ENCODE measurements at regions of chr12 and their contacts with region 1.

Region 1: GRCh38 chr12:56007564-56008559 is 10.8 kb downstream of the SUOX start:
- DNase-seq: peak; percentile 38 to 72 (median 63)
- ATAC-seq: peak; percentile 91
- H3K4me3 ChIP-seq: peak overlapping the region; percentile 57
- H3K4me3 Mint-ChIP-seq: peak overlapping the region; percentile 80 to 94 (median 88)
- H3K27ac ChIP-seq: peak overlapping the region; percentile 69
- H3K27ac Mint-ChIP-seq: peak overlapping the region; percentile 20 to 92 (median 84)
- H3K4me1 ChIP-seq: peaks cover 10% of the 10 kb centered on the region in 2 donors
- H3K4me1 Mint-ChIP-seq: peaks cover 16 to 35% (median 29%) of the 10 kb centered on the region in 7 donors
- H3K27me3 ChIP-seq: no peaks in the 10 kb centered on the region
- H3K27me3 Mint-ChIP-seq: no peaks in the 10 kb centered on the region

Region 2: DNA sequence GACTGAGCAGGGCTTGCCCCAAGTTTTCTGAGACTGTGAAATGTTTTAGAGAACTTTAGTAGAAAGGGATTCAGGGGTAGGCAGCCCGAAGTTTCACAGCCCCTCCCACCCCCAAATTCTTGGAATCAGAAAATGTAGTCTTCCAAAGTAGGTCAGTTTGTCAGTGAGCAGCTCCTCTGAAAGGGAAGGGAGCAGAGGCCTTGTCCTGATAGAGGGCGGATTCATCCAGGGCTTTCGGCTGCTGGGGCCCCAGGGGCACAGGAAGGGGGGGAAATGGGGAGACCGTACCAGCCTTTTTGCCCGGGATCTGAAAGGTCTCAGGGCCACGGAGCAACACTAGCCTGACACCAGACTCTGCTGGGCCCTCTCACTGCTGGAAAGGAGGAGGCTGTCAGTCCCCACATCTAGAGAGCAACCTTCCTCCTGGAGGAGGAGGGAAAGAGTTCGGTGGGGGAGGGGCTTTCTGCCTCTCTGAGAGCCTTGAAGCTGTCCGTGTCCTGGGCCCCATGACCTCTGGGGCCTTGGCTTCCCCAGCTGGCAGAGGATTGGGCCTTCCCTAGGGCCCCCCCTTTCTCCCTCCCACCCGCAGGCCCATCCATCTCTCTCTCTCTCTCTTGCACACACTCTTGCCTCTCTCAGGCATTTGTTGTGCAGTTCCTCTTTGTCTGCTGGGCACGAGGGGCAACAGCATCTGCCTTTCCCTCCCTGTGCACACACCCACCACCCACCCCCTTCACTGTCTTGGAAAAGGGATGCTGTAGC is 12.7 kb after region 1 on chr12 and contains the start of gene IKZF4:
- CTCF ChIA-PET with region 1: interaction called, 4 read pairs
- POLR2A ChIA-PET with region 1: interaction called, 9 read pairs
- intact Hi-C with region 1: loop called (anchors 1 to 2 kb)
- DNase-seq: peak in 1 of 9 donors; percentile 36
- ATAC-seq: peak; percentile 55
- H3K4me3 ChIP-seq: peak within 1 kb of the TSS; percentile 41
- H3K4me3 Mint-ChIP-seq: peak within 1 kb of the TSS; percentile 80 to 97 (median 88)
- H3K27ac ChIP-seq: peak within 1 kb of the TSS; percentile 62
- H3K27ac Mint-ChIP-seq: peak within 1 kb of the TSS; percentile 73 to 97 (median 93)
- H3K4me1 ChIP-seq: peaks cover 0 to 16% of the 10 kb centered on the region in 2 donors
- H3K4me1 Mint-ChIP-seq: peaks cover 7 to 58% (median 24%) of the 10 kb centered on the region in 7 donors
- H3K27me3 ChIP-seq: no peaks in the 10 kb centered on the region
- H3K27me3 Mint-ChIP-seq: no peaks in the 10 kb centered on the region
- total RNA-seq, gene IKZF4: 3.6 to 37.8 (median 5.3) TPM

Region 3: DNA sequence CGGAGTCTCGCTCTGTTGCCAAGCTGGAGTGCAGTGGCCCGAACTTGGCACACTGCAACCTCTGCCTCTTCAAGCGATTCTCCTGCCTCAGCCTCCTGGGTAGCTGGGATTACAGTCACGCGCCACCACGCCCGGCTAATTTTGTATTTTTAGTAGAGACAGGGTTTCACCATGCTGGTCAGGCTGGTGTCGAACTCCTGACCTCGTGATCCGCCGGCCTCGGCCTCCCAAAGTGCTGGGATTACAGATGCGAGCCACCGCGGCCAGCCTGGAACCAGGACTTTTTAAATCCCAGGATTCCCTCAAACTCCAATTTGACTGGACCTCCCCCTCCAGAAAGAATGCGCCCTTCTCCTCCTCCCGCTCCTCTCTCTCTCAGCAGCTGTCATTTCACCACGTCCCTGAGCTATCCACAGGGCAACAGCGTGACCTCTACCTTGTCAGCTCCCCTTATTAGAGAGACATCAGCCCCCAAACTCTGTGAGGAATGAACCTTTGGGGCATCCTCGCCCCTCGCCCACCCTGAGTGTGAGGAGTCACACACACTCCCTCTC is 122.2 kb after region 1 on chr12:
- CTCF ChIA-PET with region 1: no interaction called
- POLR2A ChIA-PET with region 1: no interaction called
- intact Hi-C with region 1: no loop called
- DNase-seq: no peak
- ATAC-seq: no peak
- H3K4me3 ChIP-seq: peak overlapping the region; percentile 77
- H3K4me3 Mint-ChIP-seq: peak overlapping the region; percentile 95 to 100 (median 98)
- H3K27ac ChIP-seq: peak overlapping the region; percentile 84
- H3K27ac Mint-ChIP-seq: peak overlapping the region; percentile 86 to 97 (median 91)
- H3K4me1 ChIP-seq: peaks cover 39 to 55% of the 10 kb centered on the region in 2 donors
- H3K4me1 Mint-ChIP-seq: peaks cover 40 to 71% (median 63%) of the 10 kb centered on the region in 7 donors
- H3K27me3 ChIP-seq: no peaks in the 10 kb centered on the region
- H3K27me3 Mint-ChIP-seq: no peaks in the 10 kb centered on the region

Region 4: GRCh38 chr12:56387152-56387736 is 379.4 kb after region 1 on chr12:
- CTCF ChIA-PET with region 1: no interaction called
- POLR2A ChIA-PET with region 1: no interaction called
- intact Hi-C with region 1: no loop called
- DNase-seq: no peak
- ATAC-seq: no peak
- H3K4me3 ChIP-seq: no peak overlapping the region
- H3K4me3 Mint-ChIP-seq: no peak overlapping the region
- H3K27ac ChIP-seq: no peak overlapping the region
- H3K27ac Mint-ChIP-seq: no peak overlapping the region
- H3K4me1 ChIP-seq: no peaks in the 10 kb centered on the region
- H3K4me1 Mint-ChIP-seq: peaks cover 0 to 3% (median 0%) of the 10 kb centered on the region in 7 donors
- H3K27me3 ChIP-seq: no peaks in the 10 kb centered on the region
- H3K27me3 Mint-ChIP-seq: peaks cover 0 to 2% (median 0%) of the 10 kb centered on the region in 5 donors